Dorsolateral prefrontal cortex (tissue), 120 donors: ENCODE measurements at regions of chr7 and their contacts with region 1.

Region 1: GRCh38 chr7:33932832-33933468 is 27.6 kb downstream of the BMPER start:
- DNase-seq: peak; percentile 76 to 90 (median 86)
- H3K4me3 ChIP-seq: peak overlapping the region in 57 of 59 donors; percentile 3 to 64 (median 42)
- H3K27ac ChIP-seq: peak overlapping the region in 45 of 59 donors; percentile 2 to 85 (median 63)
- H3K27me3 ChIP-seq: no peaks in the 10 kb centered on the region
- CTCF ChIP-seq: peak; percentile 85 to 99 (median 98)

Region 2: GRCh38 chr7:33185786-33186185 is 747.2 kb before region 1 on chr7:
- intact Hi-C with region 1: loop called in 1 of 2 experiments (anchors 5 kb)
- DNase-seq: no peak
- H3K4me3 ChIP-seq: no peak overlapping the region
- H3K27ac ChIP-seq: no peak overlapping the region
- H3K27me3 ChIP-seq: no peaks in the 10 kb centered on the region
- CTCF ChIP-seq: peak in 55 of 56 donors; percentile 33 to 85 (median 67)

Region 3: GRCh38 chr7:33243319-33243881 is 689.5 kb before region 1 on chr7:
- intact Hi-C with region 1: loop called (anchors 2 to 10 kb)
- DNase-seq: no peak
- H3K4me3 ChIP-seq: no peak overlapping the region
- H3K27ac ChIP-seq: no peak overlapping the region
- H3K27me3 ChIP-seq: no peaks in the 10 kb centered on the region
- CTCF ChIP-seq: peak; percentile 48 to 90 (median 77)

Region 4: GRCh38 chr7:33757562-33758165 is 175.3 kb before region 1 on chr7:
- intact Hi-C with region 1: loop called in 1 of 2 experiments (anchors 5 kb)
- DNase-seq: peak in 3 of 10 donors; percentile 20 to 65 (median 31)
- H3K4me3 ChIP-seq: no peak overlapping the region
- H3K27ac ChIP-seq: no peak overlapping the region
- H3K27me3 ChIP-seq: no peaks in the 10 kb centered on the region
- CTCF ChIP-seq: peak; percentile 65 to 95 (median 84)

Region 5: DNA sequence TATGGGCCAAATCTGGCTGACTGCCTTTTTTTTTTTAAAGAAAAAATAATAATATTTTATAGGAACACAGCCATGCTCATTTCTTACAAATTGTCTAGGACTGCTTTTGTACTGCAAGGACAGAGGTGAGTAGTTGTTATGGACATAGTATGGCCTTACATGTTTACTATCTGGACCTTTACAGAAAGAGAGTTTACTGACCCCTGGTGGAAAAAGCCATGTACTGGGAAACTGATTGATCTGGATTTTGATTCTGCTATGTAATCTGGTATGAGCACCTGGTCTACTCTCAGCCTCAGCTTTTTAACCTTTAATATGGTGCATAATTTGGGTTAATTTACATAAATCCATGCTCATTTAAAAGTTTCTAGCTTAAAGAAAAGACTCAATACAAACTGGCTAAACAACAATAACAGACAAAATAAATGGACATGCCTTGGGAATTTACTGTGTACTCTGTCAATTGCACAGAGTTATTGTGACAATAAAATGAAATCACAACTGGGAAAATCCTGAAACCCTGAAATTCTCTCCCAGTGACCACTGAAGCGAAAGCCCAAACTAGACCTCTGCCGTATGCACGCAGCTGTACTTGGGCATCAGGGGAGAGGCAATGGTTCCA is 233.1 kb after region 1 on chr7:
- intact Hi-C with region 1: no loop called
- DNase-seq: no peak
- H3K4me3 ChIP-seq: no peak overlapping the region
- H3K27ac ChIP-seq: peak overlapping the region in 15 of 59 donors; percentile 5 to 62 (median 25)
- H3K27me3 ChIP-seq: no peaks in the 10 kb centered on the region
- CTCF ChIP-seq: peak in 53 of 56 donors; percentile 8 to 54 (median 35)